ENCODE measurements at regions of chr21 and their contacts with region 1.

Region 1: GRCh38 chr21:31708541-31708940 is 23.4 kb downstream of the SCAF4 start:
- DNase-seq: no peak
- H3K4me3 Mint-ChIP-seq: no peak overlapping the region
- H3K27ac Mint-ChIP-seq: no peak overlapping the region
- H3K4me1 Mint-ChIP-seq: peaks cover 24% of the 10 kb centered on the region
- H3K27me3 Mint-ChIP-seq: no peaks in the 10 kb centered on the region

Region 2: DNA sequence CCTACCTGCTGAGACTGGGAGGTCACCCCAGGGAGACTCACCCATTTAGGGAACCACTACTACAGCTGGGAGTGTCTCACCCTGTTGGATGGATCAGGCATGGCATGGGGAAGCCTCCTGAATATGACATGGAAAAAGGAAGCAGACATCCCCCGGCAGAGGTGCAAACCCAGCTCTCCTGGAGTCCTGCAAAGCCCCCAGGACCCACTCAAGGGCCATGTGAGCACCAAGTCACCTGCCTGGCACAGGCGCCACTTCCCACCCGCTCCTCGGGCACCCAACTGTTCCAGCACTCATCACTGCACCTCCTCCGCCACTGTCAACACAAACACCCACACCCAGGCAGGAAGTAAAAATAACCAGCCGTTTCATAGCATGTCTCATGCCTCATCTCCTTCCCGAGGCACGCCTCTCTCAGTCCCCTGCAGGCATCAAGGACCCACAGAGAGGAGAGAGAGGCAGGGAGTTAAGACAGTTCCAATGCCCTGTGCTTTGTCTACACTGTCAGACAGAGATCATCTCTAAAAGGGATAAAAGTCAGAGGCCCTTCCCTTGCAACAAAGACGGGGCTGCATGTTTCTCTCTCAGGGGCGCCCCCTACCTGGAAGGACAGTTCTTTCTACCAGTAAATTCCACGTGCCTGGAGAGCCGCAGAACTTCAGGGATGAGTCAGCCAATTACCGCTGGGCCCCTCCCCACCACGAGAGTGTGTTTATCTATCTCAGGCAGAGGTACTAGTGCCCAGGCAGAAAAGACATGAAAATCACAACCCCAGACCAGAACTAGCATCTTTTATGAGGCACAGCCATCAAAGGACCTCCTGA is 199.1 kb before region 1 on chr21:
- intact Hi-C with region 1: no loop called
- DNase-seq: peak; percentile 95
- H3K4me3 Mint-ChIP-seq: peak overlapping the region; percentile 63
- H3K27ac Mint-ChIP-seq: peak overlapping the region; percentile 38
- H3K4me1 Mint-ChIP-seq: peaks cover 33% of the 10 kb centered on the region
- H3K27me3 Mint-ChIP-seq: peaks cover 21% of the 10 kb centered on the region

Region 3: GRCh38 chr21:31665397-31665796 is 43.1 kb before region 1 on chr21:
- intact Hi-C with region 1: loop called (anchors 5 kb)
- DNase-seq: peak; percentile 73
- H3K4me3 Mint-ChIP-seq: peak overlapping the region; percentile 55
- H3K27ac Mint-ChIP-seq: peak overlapping the region; percentile 35
- H3K4me1 Mint-ChIP-seq: peaks cover 72% of the 10 kb centered on the region
- H3K27me3 Mint-ChIP-seq: no peaks in the 10 kb centered on the region